ENCODE measurements at regions of chr3 and their contacts with region 1.

Region 1: GRCh38 chr3:9792405-9793160 is at the starts of genes ARPC4 and TADA3:
- DNase-seq: peak; percentile 92 to 97 (median 96)
- H3K4me3 ChIP-seq: peak within 1 kb of the TSS; percentile 91 to 100
- H3K4me3 Mint-ChIP-seq: peak within 1 kb of the TSS; percentile 96 to 99 (median 98)
- H3K27ac ChIP-seq: peak within 1 kb of the TSS; percentile 99
- H3K27ac Mint-ChIP-seq: peak within 1 kb of the TSS; percentile 97 to 99 (median 99)
- H3K4me1 ChIP-seq: peaks cover 63% of the 10 kb centered on the region
- H3K4me1 Mint-ChIP-seq: peaks cover 47 to 80% (median 56%) of the 10 kb centered on the region in 4 donors
- H3K27me3 ChIP-seq: no peaks in the 10 kb centered on the region
- H3K27me3 Mint-ChIP-seq: no peaks in the 10 kb centered on the region
- total RNA-seq, gene ARPC4: 164 to 168 TPM
- total RNA-seq, gene TADA3: 37.6 to 41.4 TPM

Region 2: DNA sequence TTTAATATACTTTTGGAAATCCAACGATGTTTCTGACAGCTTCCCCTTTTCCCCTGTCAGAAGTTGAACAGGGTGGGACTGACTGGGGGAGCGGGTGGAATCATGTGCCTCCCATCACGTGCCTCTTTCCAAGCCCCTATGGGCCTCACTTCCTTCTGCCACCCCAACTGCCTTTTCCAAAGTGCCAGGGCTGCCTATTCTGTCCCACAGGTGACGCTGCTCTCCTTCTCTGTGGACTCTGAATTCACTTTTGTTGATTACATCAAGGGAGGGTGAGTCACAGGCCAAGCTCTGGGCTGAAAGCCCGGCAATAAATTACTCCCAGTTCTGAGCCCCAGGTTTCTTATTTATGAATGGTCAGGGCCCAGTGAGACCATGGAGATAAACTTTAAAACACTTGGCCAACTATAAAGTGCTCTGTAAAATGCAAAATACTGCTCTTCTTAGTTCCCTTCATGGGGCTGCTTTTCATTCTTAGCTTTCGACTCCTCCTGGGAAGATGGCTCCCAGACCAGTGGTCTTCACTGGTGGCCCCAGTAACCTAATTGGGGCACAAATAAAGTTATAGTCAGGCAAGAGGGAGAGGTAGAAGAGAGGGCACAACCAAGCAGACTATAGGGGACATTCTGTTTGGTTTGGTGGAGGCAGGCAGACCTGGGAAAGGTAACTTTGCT is 76.7 kb before region 1 on chr3:
- CTCF ChIA-PET with region 1: no interaction called
- POLR2A ChIA-PET with region 1: no interaction called
- intact Hi-C with region 1: no loop called
- DNase-seq: peak in 2 of 5 donors; percentile 20 to 47
- H3K4me3 ChIP-seq: no peak overlapping the region
- H3K4me3 Mint-ChIP-seq: no peak overlapping the region
- H3K27ac ChIP-seq: no peak overlapping the region
- H3K27ac Mint-ChIP-seq: peak overlapping the region in 2 of 7 donors; percentile 29 to 60
- H3K4me1 ChIP-seq: peaks cover 8% of the 10 kb centered on the region
- H3K4me1 Mint-ChIP-seq: peaks cover 9 to 15% (median 12%) of the 10 kb centered on the region in 4 donors
- H3K27me3 ChIP-seq: no peaks in the 10 kb centered on the region
- H3K27me3 Mint-ChIP-seq: peaks cover 1 to 5% of the 10 kb centered on the region in 2 donors

Region 3: GRCh38 chr3:9749645-9750555 is 42.7 kb before region 1 on chr3 and contains the start of gene OGG1:
- CTCF ChIA-PET with region 1: interaction called, 3 read pairs
- POLR2A ChIA-PET with region 1: interaction called, 52 read pairs
- intact Hi-C with region 1: loop called (anchors 1 kb)
- DNase-seq: peak; percentile 95 to 98 (median 96)
- H3K4me3 ChIP-seq: peak within 1 kb of the TSS; percentile 58 to 92
- H3K4me3 Mint-ChIP-seq: peak within 1 kb of the TSS; percentile 88 to 98 (median 96)
- H3K27ac ChIP-seq: peak within 1 kb of the TSS; percentile 59
- H3K27ac Mint-ChIP-seq: peak within 1 kb of the TSS; percentile 93 to 98 (median 95)
- H3K4me1 ChIP-seq: peaks cover 38% of the 10 kb centered on the region
- H3K4me1 Mint-ChIP-seq: peaks cover 25 to 54% (median 39%) of the 10 kb centered on the region in 4 donors
- H3K27me3 ChIP-seq: no peaks in the 10 kb centered on the region
- H3K27me3 Mint-ChIP-seq: no peaks in the 10 kb centered on the region
- total RNA-seq, gene OGG1: 40.4 to 46.9 TPM

Region 4: DNA sequence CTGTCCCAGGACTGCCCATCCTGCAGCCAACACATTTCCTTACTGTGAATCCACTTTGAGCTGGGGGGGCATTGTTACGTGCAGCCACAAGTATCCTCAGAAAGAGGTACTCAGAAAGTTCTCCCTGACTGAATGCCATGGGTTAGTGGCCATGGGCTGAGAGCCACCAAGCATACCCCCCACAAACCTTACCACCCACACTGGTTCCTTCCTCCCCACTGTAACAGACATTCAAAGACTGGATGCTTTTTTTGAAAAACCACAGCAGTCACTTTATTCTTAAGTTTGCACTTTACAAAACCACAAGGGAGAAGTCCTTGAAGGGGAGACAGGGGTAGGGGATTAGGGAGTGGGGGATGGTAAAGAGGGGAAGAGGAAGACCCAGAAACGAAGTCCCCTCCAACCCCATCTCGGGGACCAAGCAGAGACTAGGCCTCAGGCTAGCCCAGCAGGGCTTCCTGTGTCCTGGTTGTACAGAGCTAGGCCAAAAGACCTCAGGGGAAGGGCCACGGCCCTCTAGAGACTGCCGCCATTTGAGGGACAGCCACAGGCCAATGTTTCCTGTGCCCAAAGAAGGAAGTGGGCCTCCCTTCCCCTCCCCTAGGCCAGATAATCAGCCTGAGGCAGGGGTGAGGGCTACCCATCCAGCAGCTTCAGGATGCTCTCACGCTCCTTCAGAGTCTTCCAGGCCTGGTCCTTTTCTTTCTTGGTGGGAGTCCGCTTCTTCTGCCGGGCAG is 12.7 kb before region 1 on chr3:
- CTCF ChIA-PET with region 1: interaction called, 3 read pairs
- POLR2A ChIA-PET with region 1: interaction called, 15 read pairs
- intact Hi-C with region 1: no loop called
- DNase-seq: peak in 4 of 5 donors; percentile 19 to 50 (median 36)
- H3K4me3 ChIP-seq: peak overlapping the region in 1 of 2 donors; percentile 2
- H3K4me3 Mint-ChIP-seq: peak overlapping the region in 7 of 8 donors; percentile 39 to 77 (median 69)
- H3K27ac ChIP-seq: peak overlapping the region; percentile 50
- H3K27ac Mint-ChIP-seq: peak overlapping the region; percentile 73 to 90 (median 89)
- H3K4me1 ChIP-seq: peaks cover 45% of the 10 kb centered on the region
- H3K4me1 Mint-ChIP-seq: peaks cover 40 to 57% (median 48%) of the 10 kb centered on the region in 4 donors
- H3K27me3 ChIP-seq: no peaks in the 10 kb centered on the region
- H3K27me3 Mint-ChIP-seq: no peaks in the 10 kb centered on the region

Region 5: GRCh38 chr3:9809615-9810432 is 17.2 kb after region 1 on chr3 and contains the start of gene TTLL3:
- CTCF ChIA-PET with region 1: interaction called, 15 read pairs
- POLR2A ChIA-PET with region 1: interaction called, 60 read pairs
- intact Hi-C with region 1: loop called (anchors 1 kb)
- DNase-seq: peak; percentile 34 to 62 (median 48)
- H3K4me3 ChIP-seq: peak within 1 kb of the TSS; percentile 72
- H3K4me3 Mint-ChIP-seq: peak within 1 kb of the TSS; percentile 91 to 94 (median 92)
- H3K27ac ChIP-seq: peak within 1 kb of the TSS; percentile 74
- H3K27ac Mint-ChIP-seq: peak within 1 kb of the TSS; percentile 87 to 99 (median 98)
- H3K4me1 ChIP-seq: peaks cover 27% of the 10 kb centered on the region
- H3K4me1 Mint-ChIP-seq: peaks cover 35 to 46% (median 41%) of the 10 kb centered on the region in 4 donors
- H3K27me3 ChIP-seq: no peaks in the 10 kb centered on the region
- H3K27me3 Mint-ChIP-seq: no peaks in the 10 kb centered on the region
- total RNA-seq, gene TTLL3: 81.4 to 91.7 TPM

Region 6: DNA sequence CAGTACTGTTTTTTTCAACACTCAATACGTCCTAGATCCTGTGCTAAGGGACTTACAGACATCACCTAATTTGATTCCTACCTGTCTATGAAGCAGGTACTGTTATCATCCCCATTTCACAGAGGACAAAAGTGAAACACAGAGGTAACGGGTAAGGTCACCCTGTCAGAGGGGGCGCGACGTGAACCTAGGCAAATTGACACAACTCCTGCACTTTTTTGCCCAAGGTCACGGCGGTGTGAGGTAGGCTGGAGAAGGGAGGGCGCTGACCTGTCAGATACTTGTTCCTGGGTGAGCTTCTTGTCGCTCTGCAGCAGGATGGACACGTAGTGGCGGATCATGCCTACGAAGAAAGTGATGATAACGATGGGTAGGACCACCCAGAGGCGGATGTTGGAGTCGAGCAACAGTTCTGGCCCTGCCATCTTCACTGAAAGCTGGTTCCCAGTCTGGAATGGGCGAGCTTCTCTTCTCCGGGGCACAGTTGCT is 193.7 kb after region 1 on chr3:
- CTCF ChIA-PET with region 1: no interaction called
- POLR2A ChIA-PET with region 1: no interaction called
- intact Hi-C with region 1: no loop called
- DNase-seq: no peak
- H3K4me3 ChIP-seq: peak overlapping the region; percentile 90 to 91
- H3K4me3 Mint-ChIP-seq: peak overlapping the region; percentile 95 to 99 (median 98)
- H3K27ac ChIP-seq: peak overlapping the region; percentile 96
- H3K27ac Mint-ChIP-seq: peak overlapping the region; percentile 98 to 100 (median 99)
- H3K4me1 ChIP-seq: peaks cover 31% of the 10 kb centered on the region
- H3K4me1 Mint-ChIP-seq: peaks cover 11 to 38% (median 27%) of the 10 kb centered on the region in 4 donors
- H3K27me3 ChIP-seq: no peaks in the 10 kb centered on the region
- H3K27me3 Mint-ChIP-seq: no peaks in the 10 kb centered on the region

Region 7: DNA sequence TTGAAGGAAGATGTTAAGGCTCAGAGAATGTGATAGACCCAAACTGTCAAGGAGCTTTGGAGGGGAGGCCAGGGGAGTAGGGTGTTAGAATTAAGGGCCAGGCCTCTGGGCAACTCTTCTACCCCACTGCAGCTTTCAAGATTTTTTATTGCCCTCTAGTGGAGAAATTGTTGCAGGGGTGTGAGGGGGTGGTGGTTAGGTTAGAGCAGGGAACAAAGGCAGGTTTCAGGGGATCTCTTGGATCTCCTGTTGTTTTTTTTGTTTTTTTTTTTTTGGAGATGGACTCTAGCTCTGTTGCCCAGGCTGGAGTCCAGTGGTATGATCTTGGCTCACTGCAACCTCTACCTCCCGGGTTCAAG is 529.7 kb after region 1 on chr3:
- CTCF ChIA-PET with region 1: no interaction called
- POLR2A ChIA-PET with region 1: interaction called, 6 read pairs
- intact Hi-C with region 1: loop called (anchors 2 kb)
- DNase-seq: peak in 3 of 5 donors; percentile 22 to 33 (median 23)
- H3K4me3 ChIP-seq: no peak overlapping the region
- H3K4me3 Mint-ChIP-seq: peak overlapping the region in 3 of 8 donors; percentile 20 to 92 (median 46)
- H3K27ac ChIP-seq: no peak overlapping the region
- H3K27ac Mint-ChIP-seq: peak overlapping the region in 5 of 7 donors; percentile 81 to 97 (median 86)
- H3K4me1 ChIP-seq: peaks cover 28% of the 10 kb centered on the region
- H3K4me1 Mint-ChIP-seq: peaks cover 18 to 42% (median 29%) of the 10 kb centered on the region in 4 donors
- H3K27me3 ChIP-seq: peaks cover 6% of the 10 kb centered on the region
- H3K27me3 Mint-ChIP-seq: peaks cover 2 to 5% of the 10 kb centered on the region in 2 donors